ENCODE measurements at regions of chr5 and their contacts with region 1.

Region 1: GRCh38 chr5:154405078-154405792 is 40.6 kb upstream of the SAP30L start:
- DNase-seq: peak; percentile 82 to 87 (median 86)
- ATAC-seq: peak; percentile 99
- H3K4me3 ChIP-seq: no peak overlapping the region
- H3K27ac ChIP-seq: no peak overlapping the region
- H3K4me1 ChIP-seq: peaks cover 0 to 9% of the 10 kb centered on the region in 2 experiments; a peak in 3 of 5 replicates
- H3K27me3 ChIP-seq: no peaks in the 10 kb centered on the region
- CTCF ChIP-seq: peak; percentile 84 to 93 (median 91)
- EP300 ChIP-seq: no peak
- POLR2A ChIP-seq: no peak
- RAD21 ChIP-seq: peak; percentile 91 to 94

Region 2: DNA sequence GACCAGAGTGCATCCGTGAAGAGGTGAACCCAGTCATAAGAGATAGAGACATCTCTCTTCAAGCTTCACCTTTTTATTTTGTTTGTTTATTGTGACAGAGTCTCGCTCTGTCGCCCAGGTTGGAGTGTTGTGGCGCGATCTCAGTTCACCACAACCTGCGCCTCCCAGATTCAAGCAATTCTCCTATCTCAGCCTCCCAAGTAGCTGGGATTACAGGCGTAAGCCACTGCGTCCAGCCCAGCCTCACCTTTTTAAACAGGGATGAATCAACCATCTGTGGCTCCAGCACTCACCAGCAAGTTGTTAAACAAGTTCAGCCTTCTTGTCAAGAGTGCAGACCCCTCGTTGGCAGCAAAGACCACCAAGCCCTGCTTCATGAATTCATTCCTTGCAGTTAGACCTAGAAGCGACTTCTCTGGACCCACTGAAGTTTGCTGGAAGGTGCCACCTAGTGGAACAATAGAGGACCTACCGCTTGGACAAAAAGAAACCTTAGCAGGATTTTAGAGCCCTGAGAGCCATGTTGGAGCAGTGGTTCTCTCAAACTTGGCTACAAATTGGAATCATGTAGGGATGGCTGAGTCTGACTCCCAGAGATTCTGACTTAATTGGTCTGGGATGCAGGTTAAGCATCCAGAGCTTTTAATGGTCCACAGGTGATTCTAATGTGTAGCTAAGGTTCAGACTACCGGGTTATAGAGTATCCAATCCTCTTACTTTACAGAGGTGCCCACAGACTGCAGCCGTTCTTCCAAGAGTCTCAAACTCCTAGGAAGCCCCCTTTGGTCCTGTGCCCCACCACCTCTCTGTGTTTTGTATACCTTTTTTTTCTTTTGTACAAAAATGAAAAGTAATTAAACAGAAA is 225.2 kb before region 1 on chr5:
- CTCF ChIA-PET with region 1: no interaction called
- POLR2A ChIA-PET with region 1: no interaction called
- in situ Hi-C with region 1: no loop called
- intact Hi-C with region 1: loop called (anchors 2 kb)
- DNase-seq: peak; percentile 62 to 67 (median 65)
- ATAC-seq: peak; percentile 98
- H3K4me3 ChIP-seq: no peak overlapping the region
- H3K27ac ChIP-seq: no peak overlapping the region
- H3K4me1 ChIP-seq: no peaks in the 10 kb centered on the region
- H3K27me3 ChIP-seq: peaks cover 5 to 21% of the 10 kb centered on the region in 2 experiments
- CTCF ChIP-seq: peak; percentile 79 to 82 (median 80)
- EP300 ChIP-seq: no peak
- POLR2A ChIP-seq: no peak
- RAD21 ChIP-seq: peak; percentile 76 to 79

Region 3: GRCh38 chr5:154196955-154197652 is 208.1 kb before region 1 on chr5:
- CTCF ChIA-PET with region 1: interaction called, 4 read pairs
- POLR2A ChIA-PET with region 1: interaction called, 4 read pairs
- in situ Hi-C with region 1: no loop called
- intact Hi-C with region 1: loop called (anchors 2 kb)
- DNase-seq: peak; percentile 70 to 87 (median 78)
- ATAC-seq: peak; percentile 82
- H3K4me3 ChIP-seq: peak overlapping the region; percentile 32
- H3K27ac ChIP-seq: peak overlapping the region; percentile 77
- H3K4me1 ChIP-seq: peaks cover 34 to 74% of the 10 kb centered on the region in 2 experiments
- H3K27me3 ChIP-seq: no peaks in the 10 kb centered on the region
- CTCF ChIP-seq: peak in 2 of 3 experiments; percentile 46 to 65; a peak in 4 of 6 replicates
- EP300 ChIP-seq: peak; percentile 87
- POLR2A ChIP-seq: peak; percentile 50
- RAD21 ChIP-seq: peak; percentile 53